ENCODE measurements at regions of chr3 and their contacts with region 1.

Region 1: GRCh38 chr3:183099026-183099837 is at the start of gene MCCC1:
- DNase-seq: peak; percentile 96 to 99 (median 97)
- H3K4me3 ChIP-seq: peak within 1 kb of the TSS; percentile 85 to 96
- H3K4me3 Mint-ChIP-seq: peak within 1 kb of the TSS; percentile 96 to 99 (median 97)
- H3K27ac ChIP-seq: peak within 1 kb of the TSS; percentile 81
- H3K27ac Mint-ChIP-seq: peak within 1 kb of the TSS; percentile 97 to 98 (median 97)
- H3K4me1 ChIP-seq: peaks cover 22% of the 10 kb centered on the region
- H3K4me1 Mint-ChIP-seq: peaks cover 17 to 42% (median 30%) of the 10 kb centered on the region in 4 donors
- H3K27me3 ChIP-seq: no peaks in the 10 kb centered on the region
- H3K27me3 Mint-ChIP-seq: no peaks in the 10 kb centered on the region
- total RNA-seq, gene MCCC1: 27.0 to 29.9 TPM

Region 2: DNA sequence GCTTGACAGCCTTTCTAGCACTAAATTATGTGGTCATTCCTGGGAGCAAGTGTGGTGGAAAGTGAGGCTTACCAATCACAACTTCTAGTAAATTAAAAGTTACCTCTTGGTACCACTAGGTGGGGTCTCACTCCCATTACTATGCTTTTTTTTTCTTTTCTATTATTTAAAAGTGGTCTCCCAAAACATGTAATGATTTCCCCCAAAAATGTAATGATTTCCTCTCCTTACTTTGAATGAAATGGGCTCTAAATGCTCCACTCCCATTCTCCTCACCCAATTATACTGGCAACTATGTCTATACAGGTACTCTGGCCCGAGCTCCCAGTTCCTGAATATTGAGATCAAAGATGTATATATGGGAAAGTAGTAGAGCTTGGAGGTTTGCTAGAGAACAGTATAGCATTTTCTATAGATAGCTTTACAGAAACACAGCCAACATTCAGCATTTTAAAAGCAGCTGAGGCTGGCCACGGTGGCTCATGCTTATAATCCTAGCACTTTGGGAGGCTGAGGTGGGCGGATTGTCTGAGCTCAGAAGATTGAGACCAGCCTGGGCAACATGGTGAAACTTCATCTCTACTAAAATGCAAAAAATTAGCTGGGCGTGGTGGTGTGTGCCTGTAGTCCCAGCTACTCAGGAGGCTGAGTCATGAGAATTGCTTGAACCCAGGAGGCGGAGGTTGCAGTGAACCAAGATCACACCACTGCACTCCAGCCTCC is 189.8 kb before region 1 on chr3:
- CTCF ChIA-PET with region 1: no interaction called
- POLR2A ChIA-PET with region 1: no interaction called
- intact Hi-C with region 1: loop called (anchors 1 kb)
- DNase-seq: peak in 2 of 5 donors; percentile 16 to 23
- H3K4me3 ChIP-seq: no peak overlapping the region
- H3K4me3 Mint-ChIP-seq: no peak overlapping the region
- H3K27ac ChIP-seq: no peak overlapping the region
- H3K27ac Mint-ChIP-seq: peak overlapping the region in 4 of 7 donors; percentile 8 to 62 (median 28)
- H3K4me1 ChIP-seq: peaks cover 41% of the 10 kb centered on the region
- H3K4me1 Mint-ChIP-seq: peaks cover 30 to 53% (median 41%) of the 10 kb centered on the region in 4 donors
- H3K27me3 ChIP-seq: no peaks in the 10 kb centered on the region
- H3K27me3 Mint-ChIP-seq: no peaks in the 10 kb centered on the region

Region 3: GRCh38 chr3:182947888-182948287 is 151.3 kb before region 1 on chr3:
- CTCF ChIA-PET with region 1: no interaction called
- POLR2A ChIA-PET with region 1: no interaction called
- intact Hi-C with region 1: no loop called
- DNase-seq: no peak
- H3K4me3 ChIP-seq: no peak overlapping the region
- H3K4me3 Mint-ChIP-seq: no peak overlapping the region
- H3K27ac ChIP-seq: no peak overlapping the region
- H3K27ac Mint-ChIP-seq: peak overlapping the region in 2 of 7 donors; percentile 6 to 64
- H3K4me1 ChIP-seq: no peaks in the 10 kb centered on the region
- H3K4me1 Mint-ChIP-seq: peaks cover 0 to 2% (median 0%) of the 10 kb centered on the region in 4 donors
- H3K27me3 ChIP-seq: no peaks in the 10 kb centered on the region
- H3K27me3 Mint-ChIP-seq: no peaks in the 10 kb centered on the region

Region 4: GRCh38 chr3:183085634-183086390 is 13.4 kb before region 1 on chr3:
- CTCF ChIA-PET with region 1: interaction called, 14 read pairs
- POLR2A ChIA-PET with region 1: interaction called, 5 read pairs
- intact Hi-C with region 1: no loop called
- DNase-seq: no peak
- H3K4me3 ChIP-seq: no peak overlapping the region
- H3K4me3 Mint-ChIP-seq: no peak overlapping the region
- H3K27ac ChIP-seq: no peak overlapping the region
- H3K27ac Mint-ChIP-seq: peak overlapping the region in 2 of 7 donors; percentile 29 to 83
- H3K4me1 ChIP-seq: no peaks in the 10 kb centered on the region
- H3K4me1 Mint-ChIP-seq: peaks cover 0 to 13% (median 8%) of the 10 kb centered on the region in 4 donors
- H3K27me3 ChIP-seq: no peaks in the 10 kb centered on the region
- H3K27me3 Mint-ChIP-seq: no peaks in the 10 kb centered on the region

Region 5: DNA sequence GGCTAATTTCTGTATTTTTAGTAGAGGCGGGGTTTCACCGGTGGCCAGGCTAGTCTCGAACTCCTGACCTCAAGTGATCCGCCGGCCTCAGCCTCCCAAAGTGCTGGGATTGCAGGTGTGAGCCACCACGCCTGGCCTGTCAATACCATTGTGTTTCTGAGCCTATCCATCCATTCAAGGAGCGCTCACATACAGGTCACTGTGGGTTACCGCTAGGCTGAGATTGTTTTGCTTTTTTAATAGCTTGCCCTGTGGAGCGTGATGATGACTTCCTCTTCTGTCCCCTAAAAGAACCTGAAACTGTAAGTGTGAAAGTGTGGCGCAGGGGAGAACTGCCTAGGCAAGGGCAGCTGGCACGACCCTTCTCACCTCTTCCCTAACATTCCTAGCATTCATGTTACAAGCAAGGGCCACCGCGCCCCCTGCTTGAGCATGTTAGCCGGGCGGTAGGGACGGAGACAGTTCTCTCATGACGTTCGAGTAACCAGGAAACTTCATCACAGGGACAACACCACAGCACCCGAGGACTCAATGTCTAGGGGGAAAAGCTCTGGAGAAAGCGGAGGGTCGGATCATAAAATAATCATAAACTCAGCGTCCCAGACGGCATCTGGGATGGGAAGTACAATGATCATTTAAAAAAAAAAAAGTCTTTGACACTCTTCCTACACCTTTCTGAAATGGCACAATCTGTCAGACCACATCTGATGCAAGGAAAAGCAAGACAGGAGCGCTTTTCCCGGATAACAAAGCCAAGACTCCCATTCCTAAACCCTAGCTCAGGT is 62.5 kb after region 1 on chr3:
- CTCF ChIA-PET with region 1: no interaction called
- POLR2A ChIA-PET with region 1: no interaction called
- intact Hi-C with region 1: loop called (anchors 1 kb)
- DNase-seq: peak in 2 of 5 donors; percentile 14 to 18
- H3K4me3 ChIP-seq: peak overlapping the region; percentile 33 to 70
- H3K4me3 Mint-ChIP-seq: peak overlapping the region; percentile 83 to 95 (median 92)
- H3K27ac ChIP-seq: peak overlapping the region; percentile 51
- H3K27ac Mint-ChIP-seq: peak overlapping the region; percentile 66 to 90 (median 81)
- H3K4me1 ChIP-seq: peaks cover 7% of the 10 kb centered on the region
- H3K4me1 Mint-ChIP-seq: peaks cover 8 to 11% (median 9%) of the 10 kb centered on the region in 4 donors
- H3K27me3 ChIP-seq: no peaks in the 10 kb centered on the region
- H3K27me3 Mint-ChIP-seq: no peaks in the 10 kb centered on the region

Region 6: DNA sequence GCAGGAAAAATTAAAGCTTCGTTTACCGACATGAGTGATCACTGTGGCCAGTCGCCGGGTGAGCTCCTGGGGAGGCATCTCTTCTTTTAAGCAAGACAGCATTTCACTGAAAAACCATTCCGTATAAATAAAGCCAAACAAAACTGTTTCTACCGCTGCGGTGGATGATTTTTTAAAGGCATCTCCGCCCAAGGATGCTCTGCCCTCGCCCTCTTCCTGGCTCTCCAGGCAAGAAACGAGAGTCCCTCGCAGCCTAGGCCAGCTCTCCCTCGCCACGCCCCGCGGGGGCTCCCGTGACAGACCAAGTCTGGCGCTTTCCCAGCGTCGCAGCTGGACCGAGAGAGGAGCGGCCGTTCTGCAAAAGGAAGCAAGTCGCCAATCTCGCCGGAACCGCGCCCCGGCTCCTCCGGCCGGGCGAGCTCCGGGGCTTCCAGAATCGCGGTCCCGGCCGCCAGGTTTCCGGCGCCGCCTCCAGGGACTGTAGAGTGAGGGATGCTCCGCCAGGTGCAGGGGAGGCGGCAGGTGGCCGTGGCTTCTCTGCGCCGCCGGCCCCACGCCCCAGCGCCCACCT is 328.7 kb after region 1 on chr3:
- CTCF ChIA-PET with region 1: no interaction called
- POLR2A ChIA-PET with region 1: interaction called, 3 read pairs
- intact Hi-C with region 1: loop called (anchors 1 kb)
- DNase-seq: peak in 2 of 5 donors; percentile 12 to 44
- H3K4me3 ChIP-seq: peak overlapping the region; percentile 71 to 81
- H3K4me3 Mint-ChIP-seq: peak overlapping the region; percentile 84 to 92 (median 88)
- H3K27ac ChIP-seq: peak overlapping the region; percentile 38
- H3K27ac Mint-ChIP-seq: peak overlapping the region in 5 of 7 donors; percentile 46 to 82 (median 54)
- H3K4me1 ChIP-seq: peaks cover 23% of the 10 kb centered on the region
- H3K4me1 Mint-ChIP-seq: peaks cover 24 to 45% (median 32%) of the 10 kb centered on the region in 4 donors
- H3K27me3 ChIP-seq: no peaks in the 10 kb centered on the region
- H3K27me3 Mint-ChIP-seq: peaks cover 0 to 6% of the 10 kb centered on the region in 2 donors

Region 7: GRCh38 chr3:183825456-183826161 is 726.4 kb after region 1 on chr3 and contains the start of gene MAP6D1:
- CTCF ChIA-PET with region 1: no interaction called
- POLR2A ChIA-PET with region 1: no interaction called
- intact Hi-C with region 1: no loop called
- DNase-seq: peak in 3 of 5 donors; percentile 11 to 45 (median 22)
- H3K4me3 ChIP-seq: peak within 1 kb of the TSS in 1 of 2 donors; percentile 49
- H3K4me3 Mint-ChIP-seq: peak within 1 kb of the TSS; percentile 55 to 84 (median 80)
- H3K27ac ChIP-seq: no peak within 1 kb of the TSS
- H3K27ac Mint-ChIP-seq: peak within 1 kb of the TSS in 5 of 7 donors; percentile 9 to 74 (median 47)
- H3K4me1 ChIP-seq: peaks cover 13% of the 10 kb centered on the region
- H3K4me1 Mint-ChIP-seq: peaks cover 8 to 16% (median 15%) of the 10 kb centered on the region in 4 donors
- H3K27me3 ChIP-seq: no peaks in the 10 kb centered on the region
- H3K27me3 Mint-ChIP-seq: peaks cover 0 to 6% of the 10 kb centered on the region in 2 donors
- total RNA-seq, gene MAP6D1: 1.0 to 3.1 TPM